Sciatic nerve (tissue), 2 donors: ENCODE measurements at regions of chr5 and their contacts with region 1.

Region 1: DNA sequence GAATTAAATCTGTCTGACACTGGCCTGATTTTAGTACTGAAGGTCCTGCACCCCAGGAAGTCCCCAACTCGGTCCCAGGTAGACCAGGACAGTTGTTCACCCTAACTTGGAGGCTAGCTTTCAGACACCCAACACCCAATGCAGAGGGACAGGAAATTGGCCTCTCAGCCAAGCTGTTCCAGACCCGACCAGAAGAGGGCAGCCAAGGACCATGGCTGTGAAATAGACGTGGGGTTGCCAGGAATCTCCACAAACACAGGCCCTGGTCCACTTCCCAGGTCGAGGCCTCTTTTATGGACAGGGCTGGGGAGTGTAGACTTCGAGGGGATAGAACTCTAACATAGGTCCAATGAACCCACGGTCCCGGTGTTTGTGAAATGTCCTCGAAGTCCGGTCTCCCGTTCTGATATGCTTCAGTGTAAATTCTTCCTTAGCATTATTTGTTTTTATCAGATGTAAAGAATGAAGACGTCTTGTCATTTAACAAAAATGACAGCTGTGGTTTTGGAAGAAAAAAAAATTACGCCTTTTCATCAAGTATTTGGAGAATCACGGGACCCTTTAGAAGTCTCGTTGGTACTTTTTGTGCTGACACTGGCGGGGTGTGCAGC is 260.3 kb upstream of the ADAMTS16 start:
- DNase-seq: peak; percentile 88
- ATAC-seq: peak; percentile 86

Region 2: GRCh38 chr5:5046680-5047502 is 167.1 kb after region 1 on chr5:
- intact Hi-C with region 1: no loop called
- DNase-seq: no peak
- ATAC-seq: no peak

Region 3: DNA sequence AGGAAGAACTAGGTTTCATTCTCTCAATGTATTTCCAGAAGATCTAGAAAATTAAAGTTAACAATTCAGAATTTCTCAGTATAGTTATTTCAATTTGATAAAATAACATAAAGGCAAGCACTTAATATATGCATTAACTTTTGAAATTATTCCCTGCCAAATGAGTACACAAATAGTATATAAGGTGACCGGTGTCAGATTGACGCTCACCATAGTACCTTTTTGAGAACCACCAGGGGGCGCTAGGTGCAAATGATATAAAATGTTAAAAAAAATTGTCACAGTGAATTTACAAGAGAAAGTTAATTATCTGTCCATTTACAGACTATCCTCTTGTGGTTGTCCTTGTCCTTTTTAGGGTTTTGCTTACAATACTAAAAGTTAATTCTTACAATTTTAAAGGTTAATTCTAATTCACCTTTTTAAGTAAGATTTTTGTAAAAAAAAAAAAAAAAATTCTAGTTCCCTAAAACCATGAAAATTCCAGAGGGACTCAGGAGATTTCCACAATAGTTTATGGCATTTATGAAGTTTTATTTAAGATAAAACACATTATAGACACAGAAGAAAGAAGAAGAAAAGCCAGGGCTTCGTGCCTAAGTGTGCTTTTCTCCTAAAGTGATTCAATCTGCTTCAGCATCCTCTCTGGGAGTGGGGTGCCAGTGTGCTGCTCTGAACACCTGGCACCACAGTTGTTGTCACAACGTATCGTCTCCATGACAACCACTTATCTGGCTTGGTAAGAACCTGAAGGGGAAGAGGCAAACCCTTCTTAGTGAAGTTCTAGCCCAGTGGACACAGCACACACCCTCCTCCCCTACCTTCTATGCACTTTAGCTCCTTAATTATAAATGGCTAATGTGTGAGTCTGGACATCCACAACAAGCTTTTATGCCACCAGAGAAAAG is 262.1 kb after region 1 on chr5:
- intact Hi-C with region 1: loop called (anchors 10 kb)
- DNase-seq: peak; percentile 76
- ATAC-seq: peak; percentile 61

Region 4: DNA sequence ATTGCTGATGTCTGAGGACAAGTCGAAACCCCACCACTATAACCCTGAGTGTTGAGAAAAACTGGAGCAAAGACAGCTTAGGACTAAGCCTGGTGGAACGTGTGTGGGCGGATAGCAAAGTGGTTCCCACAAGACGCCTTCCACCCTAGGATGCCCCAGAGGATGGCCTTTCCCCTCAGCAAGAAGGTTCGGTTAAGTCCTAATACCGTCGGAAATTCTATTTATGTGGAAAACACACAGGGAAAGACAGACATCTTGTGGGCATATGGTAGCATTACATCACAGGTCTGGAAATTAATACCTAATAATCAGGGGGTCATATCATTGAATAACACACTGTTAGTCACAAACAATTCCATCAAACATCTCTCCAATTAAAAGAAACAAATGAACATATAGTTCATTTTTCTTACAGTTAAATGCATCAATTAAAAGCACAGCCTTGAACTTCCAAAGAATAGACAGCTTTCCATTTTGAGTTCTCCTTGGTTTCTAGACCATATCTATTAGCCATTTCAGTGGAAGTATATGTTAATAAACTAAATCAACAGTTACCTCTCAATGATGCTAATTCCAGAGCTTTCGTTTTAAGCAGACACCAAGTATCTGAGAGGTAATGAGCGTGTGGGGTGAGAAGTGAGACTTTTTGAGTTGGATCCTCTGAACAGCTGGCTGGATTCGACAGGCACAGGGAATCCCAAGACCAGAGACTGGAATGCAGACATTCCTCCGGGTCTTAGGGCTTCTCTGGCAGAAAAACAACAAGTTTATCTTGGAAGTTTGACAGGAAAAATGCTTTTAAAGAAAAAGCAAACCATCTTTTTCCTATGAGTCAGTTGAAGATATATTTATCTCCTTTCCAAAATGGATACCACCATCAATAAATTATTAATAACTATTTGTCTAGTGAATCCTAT is 539.8 kb after region 1 on chr5:
- intact Hi-C with region 1: loop called (anchors 10 kb)
- DNase-seq: no peak
- ATAC-seq: no peak